AG04449 (cell line): ENCODE measurements at regions of chr3 and their contacts with region 1.

Region 1: DNA sequence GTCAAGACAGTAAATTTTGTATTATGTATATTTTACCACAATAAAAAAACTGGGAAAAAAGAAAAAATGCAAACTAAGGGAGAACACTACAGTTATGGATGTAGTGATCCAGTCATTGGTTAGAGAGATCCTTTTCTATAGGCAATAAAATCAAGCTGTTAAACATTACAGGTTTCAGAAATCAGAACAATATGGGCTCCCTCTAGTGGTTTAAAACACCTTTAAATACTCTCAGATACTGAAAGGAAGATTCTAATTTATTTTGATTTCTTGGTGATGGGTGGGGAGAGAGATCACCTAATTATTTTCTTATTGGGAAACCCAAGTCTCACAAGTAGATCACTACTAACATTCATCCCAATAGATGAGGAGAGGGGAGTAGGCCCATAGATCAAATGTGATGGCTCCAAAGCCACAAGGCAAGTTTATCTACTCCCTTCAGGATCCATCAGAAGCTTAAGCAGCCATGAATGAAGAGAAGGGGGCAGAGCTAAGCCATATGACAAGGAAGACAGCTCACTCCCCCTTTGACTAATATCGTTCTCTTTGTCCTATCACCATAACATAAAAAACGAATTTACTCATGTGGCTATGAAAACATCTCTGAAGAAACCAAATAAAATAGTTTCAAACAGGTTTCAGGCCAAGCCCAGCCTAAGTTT is 118.6 kb downstream of the ANO10 start:
- DNase-seq: no peak
- H3K4me3 ChIP-seq: no peak overlapping the region
- CTCF ChIP-seq: no peak

Region 2: DNA sequence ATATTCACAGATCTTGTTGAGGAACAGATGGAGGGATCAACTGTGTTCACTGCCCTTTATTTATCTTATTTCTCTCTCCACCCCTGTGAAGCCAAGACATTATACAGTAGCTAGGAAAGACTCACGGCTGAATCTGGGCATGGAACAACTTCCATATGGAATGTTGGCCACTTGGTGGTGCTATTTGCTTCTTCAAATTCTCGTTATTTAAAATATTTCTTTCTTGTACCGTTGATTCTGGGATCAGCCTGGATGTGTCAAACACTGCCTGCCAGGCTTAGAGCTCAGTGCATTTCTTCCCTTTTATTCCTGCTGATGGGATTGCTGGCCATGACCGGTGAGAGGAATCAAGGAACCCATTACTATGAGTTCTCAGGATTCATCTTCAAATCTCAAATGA is 541.6 kb before region 1 on chr3:
- CTCF ChIA-PET with region 1: interaction called, 24 read pairs
- POLR2A ChIA-PET with region 1: no interaction called
- DNase-seq: peak; percentile 4
- H3K4me3 ChIP-seq: no peak overlapping the region
- CTCF ChIP-seq: peak; percentile 50

Region 3: DNA sequence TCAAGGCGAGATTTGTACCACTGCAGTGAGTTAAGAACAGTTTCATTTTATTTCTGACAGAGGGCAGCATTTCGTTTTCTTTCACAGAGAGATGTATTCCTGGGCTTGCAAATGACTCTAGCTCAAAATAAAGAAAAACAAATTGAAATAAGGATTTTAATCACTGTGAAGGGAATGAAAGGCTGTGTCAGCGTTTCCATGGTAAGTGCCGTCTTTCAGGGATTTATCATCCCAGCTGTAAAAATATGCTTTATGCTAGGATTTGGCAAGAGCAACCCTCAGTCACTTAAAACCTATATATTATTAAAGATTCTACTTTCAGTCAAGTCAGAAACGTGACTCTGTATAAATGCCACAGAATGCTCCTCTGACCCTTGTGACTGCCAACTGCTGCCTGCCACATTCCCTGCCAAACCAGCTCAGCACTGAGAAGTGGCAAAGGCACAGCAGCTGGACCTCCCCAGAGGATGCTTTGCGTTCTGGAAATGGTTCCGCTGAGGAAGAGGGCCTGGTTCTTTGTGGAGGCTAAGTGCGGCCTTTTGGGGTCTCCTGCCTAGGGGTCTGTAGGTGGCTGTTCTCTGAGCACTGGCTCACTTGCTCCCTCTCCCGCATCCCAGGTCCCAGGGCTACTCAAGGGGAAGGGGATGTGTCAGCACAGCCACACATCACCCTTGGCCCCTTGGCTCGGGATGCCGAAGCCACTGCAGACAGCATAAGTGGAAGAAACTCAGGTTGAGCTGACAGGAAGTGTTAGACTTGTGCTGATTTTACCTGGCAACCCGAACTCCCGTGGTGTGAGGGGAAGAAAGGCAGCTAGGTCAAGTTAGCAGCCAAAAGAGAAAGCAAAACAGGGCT is 340.7 kb before region 1 on chr3:
- CTCF ChIA-PET with region 1: interaction called, 87 read pairs
- POLR2A ChIA-PET with region 1: no interaction called
- DNase-seq: peak; percentile 55
- H3K4me3 ChIP-seq: no peak overlapping the region
- CTCF ChIP-seq: peak; percentile 29

Region 4: DNA sequence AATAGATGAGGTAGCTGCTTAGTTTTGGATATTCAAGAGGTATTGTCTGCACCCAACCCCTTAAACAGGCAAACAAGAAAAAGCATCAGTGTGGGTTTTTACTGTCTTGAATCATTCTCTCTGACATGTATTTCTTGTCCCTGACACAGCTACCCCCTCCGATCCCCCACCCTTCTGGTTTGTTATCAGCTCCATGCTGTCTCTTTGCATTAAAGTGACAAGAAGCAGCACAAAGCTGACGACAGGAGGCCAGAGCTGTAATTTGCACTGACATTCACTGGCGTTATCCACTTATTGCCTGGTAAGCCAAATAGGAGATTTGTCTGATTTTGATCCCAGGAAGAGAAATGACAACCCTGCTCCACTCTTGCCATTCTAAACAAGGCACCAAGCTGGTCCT is 300.2 kb before region 1 on chr3:
- CTCF ChIA-PET with region 1: no interaction called
- POLR2A ChIA-PET with region 1: no interaction called
- DNase-seq: no peak
- H3K4me3 ChIP-seq: no peak overlapping the region
- CTCF ChIP-seq: no peak

Region 5: DNA sequence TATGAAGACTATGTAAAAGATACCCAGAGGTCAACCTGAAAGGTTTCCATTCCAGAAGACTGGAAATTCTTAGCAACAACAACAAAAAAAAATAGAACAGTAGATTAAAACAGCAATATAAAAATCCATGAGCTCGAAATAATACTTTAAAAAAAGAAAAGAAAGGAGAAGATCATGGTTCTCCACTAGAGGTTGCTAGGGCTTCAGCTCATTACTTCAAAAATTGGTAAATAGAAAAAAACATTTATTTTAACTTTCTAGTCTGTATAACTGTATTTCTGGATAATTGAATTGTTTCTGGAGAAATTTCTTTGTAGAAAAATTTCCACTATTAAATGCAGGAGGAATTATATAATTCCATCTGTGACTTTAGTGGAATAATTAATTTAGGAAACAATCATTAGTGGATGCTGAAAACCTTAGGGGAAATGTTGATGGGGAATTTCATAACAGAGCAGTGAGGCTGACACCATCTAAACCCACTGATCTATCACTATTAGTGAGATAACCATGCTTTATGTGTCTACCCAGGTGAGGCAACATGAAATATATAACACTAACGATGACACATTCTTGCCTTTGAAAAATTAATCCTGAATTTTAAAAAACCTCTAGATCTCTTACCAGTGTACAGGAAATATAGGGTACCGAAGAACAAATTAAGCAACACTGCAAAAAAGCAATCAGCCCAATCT is 279.4 kb before region 1 on chr3:
- CTCF ChIA-PET with region 1: interaction called, 34 read pairs
- POLR2A ChIA-PET with region 1: no interaction called
- DNase-seq: no peak
- H3K4me3 ChIP-seq: no peak overlapping the region
- CTCF ChIP-seq: no peak

Region 6: DNA sequence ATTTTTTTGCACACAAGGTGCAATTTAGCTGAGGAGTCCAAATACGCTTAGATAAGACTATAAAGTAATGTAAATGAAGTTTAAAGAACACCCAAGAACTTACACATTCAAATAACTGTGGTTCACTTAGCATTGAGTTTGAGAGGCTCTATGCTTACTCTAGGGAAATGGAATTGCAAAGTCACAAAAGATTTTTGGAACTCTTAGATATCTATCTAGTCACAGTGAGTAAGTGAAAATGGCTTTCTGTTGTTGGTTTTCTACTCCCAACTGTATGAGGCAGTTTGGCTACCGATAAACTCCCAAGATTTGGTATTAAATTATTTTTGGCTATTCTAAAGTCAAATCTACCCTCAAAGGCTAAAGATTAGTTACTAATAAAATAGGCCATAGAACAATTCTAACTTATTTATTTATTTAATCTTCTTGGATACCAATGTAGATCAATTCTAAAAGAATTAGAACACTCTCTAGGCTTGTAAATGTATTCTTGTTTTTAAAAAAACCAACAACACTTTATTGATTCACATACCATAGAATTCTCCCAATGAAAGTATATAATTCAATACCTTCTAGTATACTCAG is 51.4 kb before region 1 on chr3:
- CTCF ChIA-PET with region 1: no interaction called
- POLR2A ChIA-PET with region 1: no interaction called
- DNase-seq: no peak
- H3K4me3 ChIP-seq: no peak overlapping the region
- CTCF ChIP-seq: no peak

Region 7: GRCh38 chr3:43490725-43491124 is 12.5 kb before region 1 on chr3:
- CTCF ChIA-PET with region 1: interaction called, 10 read pairs
- POLR2A ChIA-PET with region 1: no interaction called
- DNase-seq: no peak
- H3K4me3 ChIP-seq: no peak overlapping the region
- CTCF ChIP-seq: no peak

Region 8: DNA sequence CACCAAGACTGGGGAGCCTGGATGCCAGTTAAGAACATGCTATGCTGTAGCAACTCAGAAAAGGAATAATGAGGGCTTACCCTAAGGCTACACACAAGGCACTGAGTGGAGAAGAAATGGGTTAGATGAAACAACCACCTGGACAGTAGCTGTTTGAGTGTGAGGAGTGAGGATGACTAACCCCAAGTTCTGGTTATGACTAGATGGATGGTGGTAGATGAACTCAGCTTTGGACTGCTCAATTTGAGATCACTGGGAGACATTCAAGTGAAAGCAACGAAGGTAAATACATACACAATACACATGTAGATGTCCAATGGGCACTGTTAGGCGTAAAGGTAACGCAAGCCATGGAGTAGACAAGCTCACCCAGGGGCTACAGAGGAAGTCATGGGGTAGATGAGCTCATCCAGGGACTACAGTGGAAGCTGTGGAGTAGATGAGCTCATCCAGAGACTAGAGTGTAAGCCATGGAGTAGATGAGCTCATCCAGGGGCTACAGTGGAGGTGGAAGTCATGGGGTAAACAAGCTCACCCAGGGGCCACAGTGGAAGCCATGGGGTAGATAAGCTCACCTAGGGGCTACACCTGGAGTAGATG is 20.4 kb after region 1 on chr3:
- CTCF ChIA-PET with region 1: interaction called, 11 read pairs
- POLR2A ChIA-PET with region 1: no interaction called
- DNase-seq: no peak
- H3K4me3 ChIP-seq: no peak overlapping the region
- CTCF ChIP-seq: no peak